Activated CD4-positive, alpha-beta memory T cell treated with anti-CD3 and anti-CD28 coated beads for 36 hours (primary cell): ENCODE measurements at regions of chr17 and their contacts with region 1.

Region 1: DNA sequence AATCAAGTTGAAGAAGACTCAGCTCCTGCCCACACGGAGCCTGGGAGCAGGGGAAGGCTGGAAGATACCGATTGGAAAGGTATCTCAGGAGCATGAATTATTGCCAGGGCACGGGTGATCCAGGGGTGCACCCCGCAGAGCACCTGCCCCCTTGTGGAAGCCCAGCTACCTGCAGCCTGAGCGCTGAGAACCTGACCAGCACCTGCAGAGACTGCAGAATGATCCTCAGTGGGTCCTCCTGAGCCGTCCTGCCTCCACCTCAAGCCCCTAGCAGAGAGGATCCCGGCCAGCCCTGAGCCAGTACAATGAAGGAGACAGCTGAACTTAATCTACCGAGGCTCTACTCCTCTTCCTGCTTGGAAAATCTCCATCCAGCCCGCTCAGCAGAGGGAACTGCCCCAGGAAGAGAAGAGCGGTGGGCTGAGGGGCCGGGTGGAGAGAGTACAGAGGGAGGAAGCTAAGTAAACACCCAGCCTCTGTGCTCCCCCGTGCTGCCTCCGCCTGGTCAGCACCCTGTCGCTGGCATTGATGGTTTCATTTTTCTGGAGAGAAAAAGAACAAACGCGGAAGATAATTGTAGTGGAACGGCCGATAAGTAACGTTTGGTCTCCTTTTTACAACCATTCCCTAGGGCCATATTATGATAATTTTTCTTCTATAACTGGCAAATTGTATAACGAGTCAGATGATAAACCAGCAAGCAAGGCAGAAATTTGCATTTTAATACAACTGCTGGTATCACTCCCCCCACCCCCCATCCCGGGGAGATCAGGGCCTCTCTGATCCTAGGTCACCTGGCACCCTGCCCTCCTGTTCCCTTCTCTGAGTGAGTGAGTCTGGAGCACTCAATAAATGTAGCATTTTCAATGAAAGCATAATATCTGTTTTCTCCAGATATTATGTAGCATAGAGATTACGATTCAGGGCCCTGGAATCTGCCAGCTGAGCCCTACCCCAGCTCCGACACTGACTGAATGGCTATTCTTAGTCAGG is 204.5 kb upstream of the RPL38 start:
- DNase-seq: peak; percentile 72
- H3K4me3 Mint-ChIP-seq: no peak overlapping the region
- H3K27ac Mint-ChIP-seq: no peak overlapping the region
- H3K4me1 Mint-ChIP-seq: no peaks in the 10 kb centered on the region
- H3K27me3 Mint-ChIP-seq: peaks cover 6% of the 10 kb centered on the region

Region 2: DNA sequence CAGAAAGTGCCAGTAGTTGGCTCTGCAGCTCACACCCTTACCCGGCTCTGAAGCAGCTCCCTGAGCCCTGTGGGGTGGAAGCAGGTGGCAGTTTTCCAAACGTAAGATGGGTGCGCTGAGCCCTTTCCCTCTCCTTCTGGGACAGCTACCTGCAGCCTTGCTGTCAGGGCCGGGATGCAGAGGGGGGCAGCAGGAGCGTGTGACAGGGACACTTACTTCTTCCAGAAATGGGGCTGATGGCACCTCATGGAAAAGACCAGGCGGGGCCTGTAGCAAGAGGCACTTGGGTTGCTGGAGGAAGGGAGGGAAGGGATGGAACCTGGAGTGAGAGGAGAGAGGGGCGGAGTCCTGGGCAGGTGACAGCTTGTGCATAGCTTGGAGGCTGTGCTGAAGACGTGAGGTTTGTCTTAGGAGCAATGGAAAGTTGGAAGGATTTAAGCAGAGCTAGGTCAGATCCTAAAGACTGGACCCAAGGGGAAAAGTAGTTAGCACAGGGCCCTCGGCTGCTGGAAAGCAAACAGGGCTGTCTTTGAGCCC is 12.2 kb before region 1 on chr17:
- CTCF ChIA-PET with region 1: interaction called, 11 read pairs
- POLR2A ChIA-PET with region 1: no interaction called
- intact Hi-C with region 1: no loop called
- DNase-seq: no peak
- H3K4me3 Mint-ChIP-seq: no peak overlapping the region
- H3K27ac Mint-ChIP-seq: no peak overlapping the region
- H3K4me1 Mint-ChIP-seq: peaks cover 11% of the 10 kb centered on the region
- H3K27me3 Mint-ChIP-seq: no peaks in the 10 kb centered on the region